Activated CD4-positive, alpha-beta T cell treated with anti-CD3 and anti-CD28 coated beads, Interleukin-2, amount 10 ng/mL, durations not matched to agents 24 days and 14 days (primary cell): ENCODE measurements at regions of chr6 and their contacts with region 1.

Region 1: DNA sequence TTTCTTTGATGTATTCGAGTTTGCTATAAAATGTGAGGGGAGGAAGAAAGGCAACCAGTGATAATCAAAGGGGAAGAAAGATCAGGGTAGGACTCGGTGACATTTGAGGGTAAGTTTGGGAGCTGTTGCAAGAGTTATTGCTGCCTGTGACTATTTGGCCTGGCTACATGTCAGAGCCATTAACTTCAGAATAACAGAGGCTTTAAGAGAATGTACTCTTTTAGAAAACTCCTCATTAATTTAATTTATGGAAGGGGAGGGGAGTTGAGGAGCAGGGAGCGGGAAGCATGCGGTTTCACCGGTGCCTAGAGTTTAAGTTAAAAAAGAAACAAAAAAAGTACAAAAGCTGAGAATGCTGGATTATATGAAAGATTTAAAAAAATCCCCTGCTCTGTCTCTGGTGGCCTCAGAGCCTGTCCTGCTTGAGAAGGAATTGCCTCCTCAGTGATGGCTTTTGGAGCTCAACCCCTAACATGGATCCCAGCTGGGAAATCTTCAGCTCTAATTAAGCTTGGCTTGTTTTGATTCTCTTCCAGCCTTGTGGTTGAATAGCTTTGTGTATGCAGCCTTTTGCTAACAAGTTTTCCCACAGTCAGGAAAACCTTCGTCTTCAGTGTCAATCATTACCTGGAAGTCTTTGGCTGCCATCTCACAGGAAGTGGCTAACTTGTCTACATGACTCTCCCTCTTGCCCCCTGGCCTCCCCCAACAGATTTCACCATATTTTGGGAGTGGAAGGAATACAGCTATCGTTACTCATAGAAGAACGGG is 238.2 kb downstream of the SOX4 start:
- DNase-seq: no peak
- H3K4me3 Mint-ChIP-seq: no peak overlapping the region
- H3K27ac Mint-ChIP-seq: no peak overlapping the region
- H3K4me1 Mint-ChIP-seq: peaks cover 23% of the 10 kb centered on the region
- H3K27me3 Mint-ChIP-seq: peaks cover 6% of the 10 kb centered on the region

Region 2: GRCh38 chr6:21245488-21245887 is 586.2 kb before region 1 on chr6:
- intact Hi-C with region 1: no loop called
- DNase-seq: no peak
- H3K4me3 Mint-ChIP-seq: no peak overlapping the region
- H3K27ac Mint-ChIP-seq: no peak overlapping the region
- H3K4me1 Mint-ChIP-seq: no peaks in the 10 kb centered on the region
- H3K27me3 Mint-ChIP-seq: no peaks in the 10 kb centered on the region

Region 3: DNA sequence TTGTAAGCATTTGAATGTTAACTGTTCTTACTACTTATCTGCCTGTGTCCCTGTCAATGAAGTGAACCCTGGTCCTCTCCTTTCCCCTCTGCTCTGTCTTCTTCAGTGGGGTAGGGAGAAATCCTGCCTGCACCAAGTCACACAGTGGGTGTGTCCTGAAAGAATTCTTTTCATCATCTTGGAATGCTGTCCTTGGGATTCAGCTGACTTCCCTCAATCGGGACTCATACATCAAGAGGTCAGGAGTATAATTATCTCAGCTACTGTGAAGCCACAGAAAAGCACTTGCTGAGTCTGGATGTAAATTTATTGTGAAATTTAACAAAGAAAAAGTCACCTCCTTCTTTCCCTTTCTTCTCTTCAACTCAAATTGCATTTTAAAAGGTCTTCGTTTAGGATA is 90.4 kb after region 1 on chr6:
- intact Hi-C with region 1: loop called (anchors 10 kb)
- DNase-seq: no peak
- H3K4me3 Mint-ChIP-seq: no peak overlapping the region
- H3K27ac Mint-ChIP-seq: no peak overlapping the region
- H3K4me1 Mint-ChIP-seq: peaks cover 13% of the 10 kb centered on the region
- H3K27me3 Mint-ChIP-seq: no peaks in the 10 kb centered on the region